WTC11 (cell line): ENCODE measurements at regions of chr16 and their contacts with region 1.

Region 1: DNA sequence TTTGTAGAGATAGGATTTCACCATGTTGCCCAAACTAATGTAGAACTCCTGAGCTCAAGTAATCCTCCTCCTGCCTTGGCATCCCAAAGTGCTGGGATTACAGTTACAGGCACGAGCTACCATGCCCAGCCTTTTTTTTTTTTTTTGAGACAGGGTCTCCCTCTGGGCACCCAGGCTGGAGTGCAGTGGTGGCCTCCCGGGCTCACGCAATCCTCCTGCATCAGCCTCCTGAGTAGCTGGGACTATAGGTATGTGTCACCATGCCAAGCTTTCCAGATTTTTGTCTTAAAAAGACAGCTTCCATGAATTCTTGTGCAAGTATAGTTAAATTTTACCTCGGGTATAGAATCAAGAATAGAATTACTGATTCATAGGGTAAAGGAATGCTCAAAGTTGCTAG is 10.5 kb upstream of the RBBP6 start:
- DNase-seq: no peak
- ATAC-seq: no peak
- H3K4me3 Mint-ChIP-seq: no peak overlapping the region
- H3K27ac Mint-ChIP-seq: no peak overlapping the region
- H3K4me1 Mint-ChIP-seq: no peaks in the 10 kb centered on the region
- H3K27me3 Mint-ChIP-seq: no peaks in the 10 kb centered on the region
- CTCF ChIP-seq: no peak

Region 2: DNA sequence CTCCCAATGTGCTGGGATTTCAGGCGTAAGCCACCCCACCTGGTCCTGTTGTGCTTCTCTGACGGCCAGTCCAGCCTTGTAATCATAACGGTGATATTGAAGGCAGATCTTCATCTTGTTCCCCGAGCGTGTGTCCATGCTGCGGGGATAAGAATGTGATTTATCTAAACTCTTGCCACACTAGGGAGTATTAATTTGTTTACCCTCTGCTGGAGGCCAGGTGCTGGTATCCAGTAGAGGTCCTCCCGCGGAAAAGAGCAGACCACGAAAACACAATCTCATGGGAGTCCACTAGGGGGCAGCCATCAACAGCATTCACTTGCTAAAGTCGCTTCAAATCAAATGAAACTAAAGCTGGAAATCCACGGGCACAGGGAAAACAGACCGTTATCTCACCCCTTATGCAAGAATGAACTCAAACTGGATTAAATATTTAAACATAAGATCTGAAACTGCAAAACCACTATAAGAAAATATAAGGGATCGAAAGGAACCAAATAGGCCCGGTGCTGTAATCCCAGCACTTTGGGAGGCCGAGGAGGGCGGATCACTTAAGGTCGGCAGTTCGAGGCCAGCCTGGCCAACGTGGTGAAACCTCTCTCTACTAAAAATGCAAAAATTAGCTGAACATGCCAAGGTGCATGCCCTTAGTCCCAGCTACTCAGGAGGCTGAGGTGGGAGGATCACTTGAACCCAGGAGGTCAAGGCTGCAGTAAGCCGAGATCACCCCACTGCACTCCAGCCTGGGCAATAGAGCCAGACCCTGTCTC is 11.8 kb before region 1 on chr16:
- CTCF ChIA-PET with region 1: interaction called, 22 read pairs
- POLR2A ChIA-PET with region 1: no interaction called
- DNase-seq: peak; percentile 85
- ATAC-seq: peak; percentile 76
- H3K4me3 Mint-ChIP-seq: no peak overlapping the region
- H3K27ac Mint-ChIP-seq: no peak overlapping the region
- H3K4me1 Mint-ChIP-seq: 0 out of 2 replicates have a peak, but pooled peaks cover 3% of the 10 kb centered on the region
- H3K27me3 Mint-ChIP-seq: no peaks in the 10 kb centered on the region
- CTCF ChIP-seq: peak; percentile 86